GM18951 (cell line): ENCODE measurements at regions of chr17 and their contacts with region 1.

Region 1: GRCh38 chr17:46035112-46035818 is 36.2 kb downstream of the STH start:
- POLR2A ChIP-seq: no peak

Region 2: GRCh38 chr17:46182961-46183360 is 147.7 kb after region 1 on chr17:
- in situ Hi-C with region 1: loop called (anchors 10 kb)
- POLR2A ChIP-seq: no peak

Region 3: DNA sequence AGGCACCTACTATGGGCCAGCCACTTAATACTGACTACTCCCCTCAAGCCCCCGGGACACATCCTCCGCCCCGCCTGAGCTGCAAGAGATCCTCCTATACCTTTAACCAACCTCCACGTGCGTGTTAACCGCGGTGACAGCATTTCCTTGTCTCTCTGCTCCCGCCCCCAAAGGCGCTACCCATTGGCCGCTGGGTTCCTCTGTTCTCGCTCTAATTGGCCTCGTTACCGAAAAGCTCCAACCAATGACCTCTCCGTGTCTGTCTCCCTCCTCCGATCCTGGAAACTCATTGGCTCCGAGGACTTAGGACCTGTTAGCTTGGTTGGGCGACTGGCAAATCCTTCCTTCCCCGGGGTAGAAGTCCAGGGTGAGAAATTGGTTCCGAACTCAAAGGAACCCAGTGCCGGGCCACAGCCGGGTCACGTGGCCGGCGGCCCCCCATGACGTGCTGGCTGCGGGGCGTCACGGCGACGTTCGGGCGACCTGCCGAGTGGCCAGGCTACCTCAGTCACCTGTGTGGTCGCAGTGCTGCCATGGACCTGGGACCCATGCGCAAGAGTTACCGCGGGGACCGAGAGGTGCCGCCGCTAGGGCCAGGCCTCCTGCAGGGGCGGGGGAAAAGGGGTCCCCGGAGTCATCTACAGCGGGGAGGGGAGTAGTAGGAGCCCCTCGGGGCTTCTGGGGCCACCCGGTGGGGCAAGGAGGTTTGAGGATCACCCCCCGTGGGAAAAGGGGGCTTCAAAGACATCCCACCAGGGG is 1906.2 kb after region 1 on chr17 and contains the start of gene PNPO:
- in situ Hi-C with region 1: no loop called
- POLR2A ChIP-seq: peak; percentile 79